ENCODE measurements at regions of chr5 and their contacts with region 1.

Region 1: GRCh38 chr5:102762095-102762534 is 7.0 kb downstream of the PAM start:
- DNase-seq: no peak
- H3K4me3 Mint-ChIP-seq: peak overlapping the region; percentile 57
- H3K27ac Mint-ChIP-seq: peak overlapping the region; percentile 54
- H3K4me1 Mint-ChIP-seq: peaks cover 67% of the 10 kb centered on the region
- H3K27me3 Mint-ChIP-seq: no peaks in the 10 kb centered on the region

Region 2: GRCh38 chr5:102778478-102778877 is 16.4 kb after region 1 on chr5:
- CTCF ChIA-PET with region 1: interaction called, 11 read pairs
- POLR2A ChIA-PET with region 1: interaction called, 3 read pairs
- DNase-seq: no peak
- H3K4me3 Mint-ChIP-seq: no peak overlapping the region
- H3K27ac Mint-ChIP-seq: no peak overlapping the region
- H3K4me1 Mint-ChIP-seq: peaks cover 36% of the 10 kb centered on the region
- H3K27me3 Mint-ChIP-seq: no peaks in the 10 kb centered on the region